Activated naive CD4-positive, alpha-beta T cell treated with anti-CD3 and anti-CD28 coated beads for 36 hours (primary cell): ENCODE measurements at regions of chr5 and their contacts with region 1.

Region 1: DNA sequence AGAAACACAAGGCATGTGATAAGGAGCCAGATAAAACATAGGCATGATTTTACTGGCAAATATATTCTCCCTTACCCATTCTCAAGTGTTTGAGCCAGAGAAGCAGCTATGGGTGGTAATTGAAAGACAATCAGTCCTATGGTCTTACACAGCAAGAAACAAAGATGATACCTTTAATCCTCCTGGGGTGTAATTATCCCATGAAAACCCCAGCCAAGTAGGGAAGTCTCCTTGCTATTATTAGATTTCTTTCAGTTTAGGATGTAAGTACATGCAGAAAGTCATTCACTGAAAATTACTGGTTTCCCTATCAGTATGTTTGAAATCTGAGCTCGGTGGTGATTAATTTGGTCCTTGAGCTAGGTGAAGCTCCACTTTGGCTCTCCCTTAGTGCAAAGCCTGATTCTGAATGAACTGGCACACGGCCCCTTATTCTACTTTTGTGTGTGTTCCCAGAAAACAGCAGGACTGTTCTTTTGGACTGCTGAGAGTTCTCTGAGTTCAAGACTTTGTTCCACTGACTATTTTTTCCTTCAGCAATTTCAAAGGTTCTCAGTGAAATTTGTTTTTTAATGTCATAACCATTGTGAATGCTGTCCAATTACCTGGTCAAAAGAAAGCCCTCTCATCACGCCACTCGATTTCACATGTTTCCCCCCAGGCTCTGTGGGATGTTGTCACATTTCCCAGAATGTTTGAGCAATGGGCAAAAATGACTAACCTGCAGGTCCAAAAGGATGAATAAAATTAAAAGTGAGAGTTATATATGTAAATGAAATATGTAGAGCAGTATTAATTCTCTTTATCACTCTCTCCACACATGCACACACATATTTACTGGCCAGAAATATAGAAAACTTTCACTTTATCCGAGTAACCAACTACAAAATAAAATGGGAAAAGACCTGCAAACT is 343.0 kb downstream of the RAB3C start:
- DNase-seq: peak; percentile 43
- H3K4me3 Mint-ChIP-seq: peak overlapping the region; percentile 39
- H3K27ac Mint-ChIP-seq: peak overlapping the region; percentile 84
- H3K4me1 Mint-ChIP-seq: peaks cover 39% of the 10 kb centered on the region
- H3K27me3 Mint-ChIP-seq: peaks cover 2% of the 10 kb centered on the region

Region 2: GRCh38 chr5:58972301-58972700 is 46.4 kb after region 1 on chr5:
- CTCF ChIA-PET with region 1: no interaction called
- intact Hi-C with region 1: loop called (anchors 1 kb)
- DNase-seq: no peak
- H3K4me3 Mint-ChIP-seq: no peak overlapping the region
- H3K27ac Mint-ChIP-seq: no peak overlapping the region
- H3K4me1 Mint-ChIP-seq: peaks cover 15% of the 10 kb centered on the region
- H3K27me3 Mint-ChIP-seq: no peaks in the 10 kb centered on the region